ENCODE measurements at regions of chr1 and their contacts with region 1.

Region 1: GRCh38 chr1:25771246-25772114 is 28.5 kb upstream of the SELENON start:
- DNase-seq: peak; percentile 30
- H3K4me3 Mint-ChIP-seq: no peak overlapping the region
- H3K27ac Mint-ChIP-seq: no peak overlapping the region
- H3K4me1 Mint-ChIP-seq: peaks cover 58% of the 10 kb centered on the region
- H3K27me3 Mint-ChIP-seq: no peaks in the 10 kb centered on the region

Region 2: GRCh38 chr1:25695090-25695770 is 76.2 kb before region 1 on chr1:
- CTCF ChIA-PET with region 1: no interaction called
- POLR2A ChIA-PET with region 1: no interaction called
- intact Hi-C with region 1: loop called (anchors 5 kb)
- DNase-seq: no peak
- H3K4me3 Mint-ChIP-seq: no peak overlapping the region
- H3K27ac Mint-ChIP-seq: peak overlapping the region; percentile 59
- H3K4me1 Mint-ChIP-seq: peaks cover 45% of the 10 kb centered on the region
- H3K27me3 Mint-ChIP-seq: no peaks in the 10 kb centered on the region

Region 3: GRCh38 chr1:25819576-25820246 is 48.2 kb after region 1 on chr1 and contains the start of gene MTFR1L:
- CTCF ChIA-PET with region 1: no interaction called
- POLR2A ChIA-PET with region 1: no interaction called
- intact Hi-C with region 1: no loop called
- DNase-seq: peak; percentile 97
- H3K4me3 Mint-ChIP-seq: peak within 1 kb of the TSS; percentile 95
- H3K27ac Mint-ChIP-seq: peak within 1 kb of the TSS; percentile 89
- H3K4me1 Mint-ChIP-seq: peaks cover 33% of the 10 kb centered on the region
- H3K27me3 Mint-ChIP-seq: no peaks in the 10 kb centered on the region
- total RNA-seq, gene MTFR1L: 28.0 to 31.1 TPM